HAP-1 (cell line): ENCODE measurements at regions of chr1 and their contacts with region 1.

Region 1: GRCh38 chr1:148435406-148435805 is 47.7 kb downstream of the PPIAL4G start:
- DNase-seq: no peak
- H3K4me3 ChIP-seq: no peak overlapping the region
- H3K4me1 ChIP-seq: peaks cover 21% of the 10 kb centered on the region
- H3K27me3 ChIP-seq: no peaks in the 10 kb centered on the region

Region 2: DNA sequence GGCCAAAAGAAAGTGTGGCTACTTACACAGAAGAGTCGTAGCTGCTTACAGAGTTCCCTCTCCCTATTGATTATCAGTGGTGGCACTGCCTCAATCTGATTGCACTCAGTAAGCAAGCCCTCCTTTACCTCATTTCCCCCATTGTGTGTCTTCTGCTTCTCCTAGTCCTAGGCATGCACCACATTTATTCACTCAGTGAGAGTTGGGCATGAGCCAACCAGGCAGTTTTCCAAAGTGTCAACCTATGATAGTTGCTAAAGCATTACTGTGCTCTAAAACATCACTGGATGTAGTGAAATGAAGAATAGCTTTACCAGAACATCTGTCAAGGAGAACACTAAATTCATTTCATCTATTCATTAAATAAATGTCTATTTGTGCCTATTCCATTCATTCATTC is 694.3 kb before region 1 on chr1:
- in situ Hi-C with region 1: no loop called
- DNase-seq: no peak
- H3K4me3 ChIP-seq: no peak overlapping the region
- H3K4me1 ChIP-seq: no peaks in the 10 kb centered on the region
- H3K27me3 ChIP-seq: no peaks in the 10 kb centered on the region

Region 3: DNA sequence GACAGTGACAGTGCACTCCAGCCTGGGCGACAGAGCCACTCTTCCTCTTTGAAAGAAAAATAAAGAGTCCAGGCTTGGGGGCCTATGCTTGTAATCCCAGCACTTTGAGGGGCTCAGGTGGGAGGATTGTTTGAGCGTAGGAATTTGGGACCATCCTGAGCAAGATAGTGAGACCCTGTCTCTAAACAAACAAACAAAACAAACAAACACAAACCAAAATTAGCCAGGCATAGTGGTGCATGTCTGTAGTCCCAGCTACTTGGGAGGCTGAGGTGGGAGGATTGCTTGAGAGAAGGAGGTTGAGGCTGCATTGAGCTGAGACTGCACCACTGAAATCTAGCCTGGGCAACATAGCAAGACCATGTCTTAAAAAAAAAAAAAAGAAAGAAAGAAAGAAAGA is 175.8 kb before region 1 on chr1:
- in situ Hi-C with region 1: no loop called
- DNase-seq: no peak
- H3K4me3 ChIP-seq: no peak overlapping the region
- H3K4me1 ChIP-seq: no peaks in the 10 kb centered on the region; the same call in 1 of the 2 replicates
- H3K27me3 ChIP-seq: no peaks in the 10 kb centered on the region

Region 4: DNA sequence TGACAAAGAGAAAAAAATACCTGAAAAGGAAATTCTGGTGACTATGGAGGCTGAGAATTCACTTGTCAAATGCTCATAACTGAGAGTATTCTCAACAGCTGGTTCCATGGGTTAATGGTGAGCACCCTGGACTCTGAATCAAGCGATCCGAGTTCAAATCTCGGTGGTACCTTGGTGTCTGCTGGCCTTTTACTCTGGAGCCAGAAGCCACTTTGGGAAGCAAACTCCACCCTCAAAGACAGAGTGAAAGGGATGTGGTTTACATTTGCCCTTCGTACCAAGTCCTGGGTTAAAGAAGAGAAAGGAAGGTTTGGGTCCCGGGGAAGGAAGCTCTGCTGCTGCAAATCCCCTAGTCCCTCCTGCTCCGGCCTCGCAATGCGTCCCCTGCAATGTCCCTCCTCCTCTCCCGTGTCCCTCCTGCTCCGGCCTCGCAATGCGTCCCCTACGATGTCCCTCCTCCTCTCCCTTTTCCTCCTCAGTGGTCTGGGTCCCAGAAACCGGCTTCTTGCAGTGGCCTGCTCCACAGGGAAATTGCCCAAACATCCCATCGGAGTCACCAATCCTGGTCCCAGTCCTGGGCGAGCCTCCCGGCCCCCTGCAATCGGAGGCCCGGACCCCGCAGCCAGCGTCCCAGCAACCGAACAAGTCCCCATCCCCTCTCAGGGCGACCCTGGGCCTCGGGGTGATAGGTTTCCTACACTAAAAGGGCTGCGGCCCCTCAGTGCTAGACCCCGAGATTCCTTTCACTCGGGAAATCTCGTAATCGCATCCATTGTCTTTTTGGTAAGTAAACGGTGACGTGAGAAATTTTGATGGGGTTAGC is 81.7 kb before region 1 on chr1:
- in situ Hi-C with region 1: no loop called
- DNase-seq: no peak
- H3K4me3 ChIP-seq: no peak overlapping the region
- H3K4me1 ChIP-seq: no peaks in the 10 kb centered on the region
- H3K27me3 ChIP-seq: peaks cover 18% of the 10 kb centered on the region; the same call in 1 of the 2 replicates

Region 5: GRCh38 chr1:148367596-148367995 is 67.8 kb before region 1 on chr1:
- in situ Hi-C with region 1: no loop called
- DNase-seq: no peak
- H3K4me3 ChIP-seq: no peak overlapping the region
- H3K4me1 ChIP-seq: no peaks in the 10 kb centered on the region
- H3K27me3 ChIP-seq: no peaks in the 10 kb centered on the region

Region 6: GRCh38 chr1:148383967-148384366 is 51.4 kb before region 1 on chr1:
- in situ Hi-C with region 1: loop called (anchors 5 kb)
- DNase-seq: no peak
- H3K4me3 ChIP-seq: no peak overlapping the region
- H3K4me1 ChIP-seq: no peaks in the 10 kb centered on the region
- H3K27me3 ChIP-seq: no peaks in the 10 kb centered on the region